B cell (primary cell): ENCODE measurements at regions of chr1 and their contacts with region 1.

Region 1: GRCh38 chr1:159188375-159188788 is 16.3 kb upstream of the ACKR1 start:
- DNase-seq: peak; percentile 81
- ATAC-seq: peak; percentile 98
- H3K4me3 ChIP-seq: peak overlapping the region in 4 of 5 experiments; percentile 59 to 71 (median 64)
- H3K4me3 Mint-ChIP-seq: peak overlapping the region; percentile 97
- H3K27ac ChIP-seq: peak overlapping the region; percentile 49 to 74
- H3K27ac Mint-ChIP-seq: peak overlapping the region; percentile 87
- H3K4me1 ChIP-seq: peaks cover 19 to 21% of the 10 kb centered on the region in 2 donors
- H3K4me1 Mint-ChIP-seq: peaks cover 48% of the 10 kb centered on the region
- H3K27me3 ChIP-seq: peaks cover 0 to 2% (median 0%) of the 10 kb centered on the region in 4 experiments
- H3K27me3 Mint-ChIP-seq: peaks cover 12% of the 10 kb centered on the region
- CTCF ChIP-seq: no peak

Region 2: DNA sequence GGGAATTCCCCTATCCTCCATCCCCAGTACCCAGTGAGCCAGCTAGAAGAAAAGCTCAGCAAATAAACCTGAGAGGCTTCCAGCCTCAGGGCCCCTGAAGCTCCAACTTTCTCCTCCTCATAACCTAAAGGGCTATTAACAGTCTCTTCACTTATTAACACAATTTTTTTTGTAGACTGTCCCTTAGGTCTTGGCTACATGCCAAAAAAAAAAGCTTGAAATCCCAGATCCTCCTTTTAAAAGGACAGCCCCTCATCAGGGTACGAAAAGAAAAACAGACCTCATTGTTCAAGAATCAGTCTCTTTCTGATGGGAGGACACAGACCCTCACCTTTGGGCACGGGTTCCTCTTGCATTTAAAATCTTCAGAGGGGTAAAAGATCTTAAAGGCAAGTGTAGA is 1080.5 kb before region 1 on chr1:
- CTCF ChIA-PET with region 1: no interaction called
- POLR2A ChIA-PET with region 1: interaction called, 12 read pairs
- intact Hi-C with region 1: no loop called
- DNase-seq: no peak
- ATAC-seq: no peak
- H3K4me3 ChIP-seq: no peak overlapping the region
- H3K4me3 Mint-ChIP-seq: no peak overlapping the region
- H3K27ac ChIP-seq: no peak overlapping the region
- H3K27ac Mint-ChIP-seq: no peak overlapping the region
- H3K4me1 ChIP-seq: no peaks in the 10 kb centered on the region
- H3K4me1 Mint-ChIP-seq: peaks cover 2% of the 10 kb centered on the region
- H3K27me3 ChIP-seq: peaks cover 0 to 8% (median 2%) of the 10 kb centered on the region in 4 experiments
- H3K27me3 Mint-ChIP-seq: peaks cover 19% of the 10 kb centered on the region
- CTCF ChIP-seq: no peak

Region 3: GRCh38 chr1:158527190-158527815 is 661.1 kb before region 1 on chr1:
- CTCF ChIA-PET with region 1: no interaction called
- POLR2A ChIA-PET with region 1: interaction called, 10 read pairs
- intact Hi-C with region 1: no loop called
- DNase-seq: peak; percentile 66
- ATAC-seq: no peak
- H3K4me3 ChIP-seq: no peak overlapping the region
- H3K4me3 Mint-ChIP-seq: no peak overlapping the region
- H3K27ac ChIP-seq: no peak overlapping the region
- H3K27ac Mint-ChIP-seq: no peak overlapping the region
- H3K4me1 ChIP-seq: no peaks in the 10 kb centered on the region
- H3K4me1 Mint-ChIP-seq: no peaks in the 10 kb centered on the region
- H3K27me3 ChIP-seq: no peaks in the 10 kb centered on the region
- H3K27me3 Mint-ChIP-seq: peaks cover 30% of the 10 kb centered on the region
- CTCF ChIP-seq: peak; percentile 77

Region 4: DNA sequence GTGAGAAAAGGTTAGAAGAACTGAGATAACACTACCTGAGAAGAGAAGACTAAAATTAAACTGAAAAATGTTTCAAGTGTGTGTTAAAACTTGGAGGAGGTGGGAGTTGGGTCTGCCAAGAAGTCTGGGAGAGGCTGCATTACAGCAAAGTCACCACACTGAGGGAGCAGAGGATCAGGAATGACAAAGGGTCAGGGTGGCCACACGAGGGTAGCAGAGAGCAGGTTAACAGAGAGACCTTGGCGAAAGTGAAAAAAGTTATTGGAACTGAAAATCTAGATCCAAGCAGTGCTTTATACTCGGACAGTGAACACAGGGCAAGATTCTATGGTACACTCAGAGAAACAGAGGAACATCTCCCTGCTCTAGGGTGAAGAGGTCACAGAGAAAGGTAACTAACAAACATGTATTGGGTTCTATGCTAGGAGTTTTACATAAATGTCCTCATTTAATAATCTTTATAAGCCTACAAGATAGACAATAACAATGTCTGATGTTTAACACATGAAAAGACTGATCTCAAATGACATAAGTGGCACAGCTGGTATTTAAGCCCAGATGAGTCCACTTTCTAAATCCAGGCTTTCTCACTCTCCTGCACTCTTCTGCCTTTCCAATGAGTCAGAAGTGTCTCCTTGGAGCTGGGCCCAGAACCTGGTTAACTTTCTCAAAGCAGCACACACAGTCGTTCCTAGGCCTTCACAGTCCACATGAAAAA is 27.2 kb before region 1 on chr1:
- CTCF ChIA-PET with region 1: interaction called, 3 read pairs
- POLR2A ChIA-PET with region 1: no interaction called
- intact Hi-C with region 1: loop called (anchors 1 kb)
- DNase-seq: peak; percentile 82
- ATAC-seq: peak; percentile 98
- H3K4me3 ChIP-seq: no peak overlapping the region
- H3K4me3 Mint-ChIP-seq: no peak overlapping the region
- H3K27ac ChIP-seq: no peak overlapping the region
- H3K27ac Mint-ChIP-seq: no peak overlapping the region
- H3K4me1 ChIP-seq: peaks cover 4 to 6% of the 10 kb centered on the region in 2 donors
- H3K4me1 Mint-ChIP-seq: peaks cover 7% of the 10 kb centered on the region
- H3K27me3 ChIP-seq: no peaks in the 10 kb centered on the region
- H3K27me3 Mint-ChIP-seq: no peaks in the 10 kb centered on the region
- CTCF ChIP-seq: peak; percentile 96

Region 5: GRCh38 chr1:159171688-159172501 is 16.5 kb before region 1 on chr1:
- CTCF ChIA-PET with region 1: no interaction called
- POLR2A ChIA-PET with region 1: no interaction called
- intact Hi-C with region 1: loop called (anchors 2 kb)
- DNase-seq: peak; percentile 21
- ATAC-seq: peak; percentile 33
- H3K4me3 ChIP-seq: peak overlapping the region in 3 of 5 experiments; percentile 26 to 44 (median 27)
- H3K4me3 Mint-ChIP-seq: peak overlapping the region; percentile 76
- H3K27ac ChIP-seq: no peak overlapping the region
- H3K27ac Mint-ChIP-seq: no peak overlapping the region
- H3K4me1 ChIP-seq: peaks cover 13 to 19% of the 10 kb centered on the region in 2 donors
- H3K4me1 Mint-ChIP-seq: peaks cover 22% of the 10 kb centered on the region
- H3K27me3 ChIP-seq: peaks cover 0 to 42% (median 26%) of the 10 kb centered on the region in 4 experiments
- H3K27me3 Mint-ChIP-seq: peaks cover 30% of the 10 kb centered on the region
- CTCF ChIP-seq: no peak

Region 6: GRCh38 chr1:159274631-159275030 is 86.2 kb after region 1 on chr1:
- CTCF ChIA-PET with region 1: no interaction called
- POLR2A ChIA-PET with region 1: no interaction called
- intact Hi-C with region 1: no loop called
- DNase-seq: no peak
- ATAC-seq: no peak
- H3K4me3 ChIP-seq: no peak overlapping the region
- H3K4me3 Mint-ChIP-seq: no peak overlapping the region
- H3K27ac ChIP-seq: no peak overlapping the region
- H3K27ac Mint-ChIP-seq: no peak overlapping the region
- H3K4me1 ChIP-seq: no peaks in the 10 kb centered on the region
- H3K4me1 Mint-ChIP-seq: no peaks in the 10 kb centered on the region
- H3K27me3 ChIP-seq: peaks cover 0 to 6% (median 0%) of the 10 kb centered on the region in 4 experiments
- H3K27me3 Mint-ChIP-seq: peaks cover 32% of the 10 kb centered on the region
- CTCF ChIP-seq: no peak